ENCODE measurements at regions of chr17 and their contacts with region 1.

Region 1: GRCh38 chr17:63425482-63425881 is 20.6 kb downstream of the CYB561 start:
- DNase-seq: peak; percentile 79
- H3K4me3 Mint-ChIP-seq: no peak overlapping the region
- H3K27ac Mint-ChIP-seq: no peak overlapping the region
- H3K4me1 Mint-ChIP-seq: peaks cover 33% of the 10 kb centered on the region
- H3K27me3 Mint-ChIP-seq: no peaks in the 10 kb centered on the region

Region 2: GRCh38 chr17:63249256-63250004 is 176.1 kb before region 1 on chr17:
- CTCF ChIA-PET with region 1: no interaction called
- POLR2A ChIA-PET with region 1: no interaction called
- intact Hi-C with region 1: no loop called
- DNase-seq: no peak
- H3K4me3 Mint-ChIP-seq: no peak overlapping the region
- H3K27ac Mint-ChIP-seq: no peak overlapping the region
- H3K4me1 Mint-ChIP-seq: no peaks in the 10 kb centered on the region
- H3K27me3 Mint-ChIP-seq: no peaks in the 10 kb centered on the region

Region 3: GRCh38 chr17:63478791-63479494 is 53.5 kb after region 1 on chr17:
- CTCF ChIA-PET with region 1: interaction called, 233 read pairs
- POLR2A ChIA-PET with region 1: interaction called, 3 read pairs
- intact Hi-C with region 1: loop called (anchors 1 kb)
- DNase-seq: peak; percentile 88
- H3K4me3 Mint-ChIP-seq: peak overlapping the region; percentile 16
- H3K27ac Mint-ChIP-seq: no peak overlapping the region
- H3K4me1 Mint-ChIP-seq: peaks cover 15% of the 10 kb centered on the region
- H3K27me3 Mint-ChIP-seq: peaks cover 5% of the 10 kb centered on the region

Region 4: DNA sequence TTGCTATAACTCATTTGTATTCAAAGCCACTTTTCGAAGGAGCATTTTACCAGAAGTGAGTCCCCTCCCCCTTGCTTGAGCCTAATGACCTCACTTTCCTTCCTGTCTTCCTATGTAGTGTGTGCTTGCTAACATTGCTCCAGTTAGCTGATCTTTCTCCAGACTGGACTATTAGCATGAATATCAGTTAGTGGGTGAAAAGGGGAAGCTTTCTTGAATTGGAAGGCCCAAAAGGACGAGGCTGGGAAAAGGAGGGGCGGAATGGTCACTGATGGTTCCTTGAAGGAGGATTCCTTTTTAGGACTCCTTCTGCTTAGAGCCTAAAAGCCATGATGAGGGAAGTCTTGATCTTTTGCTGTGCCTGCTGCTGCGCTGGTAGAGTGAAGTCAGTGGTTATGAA is 208.7 kb after region 1 on chr17:
- CTCF ChIA-PET with region 1: interaction called, 11 read pairs
- POLR2A ChIA-PET with region 1: no interaction called
- intact Hi-C with region 1: no loop called
- DNase-seq: no peak
- H3K4me3 Mint-ChIP-seq: no peak overlapping the region
- H3K27ac Mint-ChIP-seq: no peak overlapping the region
- H3K4me1 Mint-ChIP-seq: peaks cover 22% of the 10 kb centered on the region
- H3K27me3 Mint-ChIP-seq: no peaks in the 10 kb centered on the region

Region 5: GRCh38 chr17:63773381-63774140 is 348.1 kb after region 1 on chr17 and contains the start of gene CCDC47:
- CTCF ChIA-PET with region 1: interaction called, 5 read pairs
- POLR2A ChIA-PET with region 1: interaction called, 5 read pairs
- intact Hi-C with region 1: loop called (anchors 10 kb)
- DNase-seq: peak; percentile 99
- H3K4me3 Mint-ChIP-seq: peak within 1 kb of the TSS; percentile 95
- H3K27ac Mint-ChIP-seq: peak within 1 kb of the TSS; percentile 100
- H3K4me1 Mint-ChIP-seq: peaks cover 47% of the 10 kb centered on the region
- H3K27me3 Mint-ChIP-seq: no peaks in the 10 kb centered on the region
- total RNA-seq, gene CCDC47: 57.6 to 60.5 TPM